Activated T-helper 1 cell treated with anti-CD3 and anti-CD28 coated beads, Interleukin-12 subunit alpha, Interleukin-12 subunit beta, Interleukin-2, Interleukin-4 antibody, amounts not matched to agents 30 ng/mL and 10 ng/mL and 1 ng/mL, durations not matched to agents 14 hours and 24 hours and 36 hours (primary cell): ENCODE measurements at regions of chr6 and their contacts with region 1.

Region 1: GRCh38 chr6:151335930-151336329 is 55.4 kb downstream of the ZBTB2 start:
- DNase-seq: no peak
- H3K4me3 Mint-ChIP-seq: no peak overlapping the region
- H3K27ac Mint-ChIP-seq: no peak overlapping the region
- H3K4me1 Mint-ChIP-seq: no peaks in the 10 kb centered on the region
- H3K27me3 Mint-ChIP-seq: peaks cover 8% of the 10 kb centered on the region

Region 2: GRCh38 chr6:150891888-150892485 is 443.9 kb before region 1 on chr6:
- intact Hi-C with region 1: loop called (anchors 1 kb)
- DNase-seq: peak; percentile 45
- H3K4me3 Mint-ChIP-seq: no peak overlapping the region
- H3K27ac Mint-ChIP-seq: no peak overlapping the region
- H3K4me1 Mint-ChIP-seq: peaks cover 24% of the 10 kb centered on the region
- H3K27me3 Mint-ChIP-seq: no peaks in the 10 kb centered on the region

Region 3: DNA sequence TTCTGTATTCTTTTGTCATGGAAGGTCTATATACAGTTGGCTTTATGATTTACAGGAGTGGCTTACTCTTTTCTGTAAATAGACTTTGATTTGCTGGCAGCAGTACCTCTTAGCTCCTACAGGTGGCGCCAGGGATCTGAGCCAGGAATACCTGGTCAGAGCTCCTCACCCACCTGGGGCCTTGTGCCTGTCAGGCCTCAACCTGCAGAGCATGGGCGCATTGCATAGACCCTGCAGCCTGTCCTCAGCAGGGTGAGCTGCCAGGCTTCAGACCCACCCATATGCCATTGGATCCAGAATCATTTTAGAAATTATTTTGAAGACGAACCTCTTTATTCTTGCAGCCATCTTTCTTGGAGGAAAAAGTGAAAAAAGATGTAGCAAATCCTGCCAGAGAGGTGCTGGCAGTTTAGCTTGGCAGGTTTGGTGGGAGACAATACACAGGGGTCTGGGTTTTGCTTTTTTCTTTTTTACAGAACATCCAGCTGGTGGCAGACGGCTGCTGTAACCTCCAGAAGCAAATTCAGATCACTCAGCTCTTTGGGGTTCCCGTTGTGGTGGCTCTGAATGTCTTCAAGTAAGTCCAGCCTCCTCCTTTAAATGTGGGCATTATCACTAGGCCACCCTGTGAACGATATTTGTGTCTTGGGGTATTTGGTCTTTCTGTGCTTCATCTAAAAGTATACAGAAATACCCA is 321.4 kb before region 1 on chr6:
- intact Hi-C with region 1: loop called (anchors 1 kb)
- DNase-seq: peak; percentile 37
- H3K4me3 Mint-ChIP-seq: no peak overlapping the region
- H3K27ac Mint-ChIP-seq: no peak overlapping the region
- H3K4me1 Mint-ChIP-seq: peaks cover 10% of the 10 kb centered on the region
- H3K27me3 Mint-ChIP-seq: no peaks in the 10 kb centered on the region

Region 4: GRCh38 chr6:151059612-151060095 is 276.3 kb before region 1 on chr6:
- intact Hi-C with region 1: no loop called
- DNase-seq: no peak
- H3K4me3 Mint-ChIP-seq: no peak overlapping the region
- H3K27ac Mint-ChIP-seq: no peak overlapping the region
- H3K4me1 Mint-ChIP-seq: no peaks in the 10 kb centered on the region
- H3K27me3 Mint-ChIP-seq: no peaks in the 10 kb centered on the region

Region 5: DNA sequence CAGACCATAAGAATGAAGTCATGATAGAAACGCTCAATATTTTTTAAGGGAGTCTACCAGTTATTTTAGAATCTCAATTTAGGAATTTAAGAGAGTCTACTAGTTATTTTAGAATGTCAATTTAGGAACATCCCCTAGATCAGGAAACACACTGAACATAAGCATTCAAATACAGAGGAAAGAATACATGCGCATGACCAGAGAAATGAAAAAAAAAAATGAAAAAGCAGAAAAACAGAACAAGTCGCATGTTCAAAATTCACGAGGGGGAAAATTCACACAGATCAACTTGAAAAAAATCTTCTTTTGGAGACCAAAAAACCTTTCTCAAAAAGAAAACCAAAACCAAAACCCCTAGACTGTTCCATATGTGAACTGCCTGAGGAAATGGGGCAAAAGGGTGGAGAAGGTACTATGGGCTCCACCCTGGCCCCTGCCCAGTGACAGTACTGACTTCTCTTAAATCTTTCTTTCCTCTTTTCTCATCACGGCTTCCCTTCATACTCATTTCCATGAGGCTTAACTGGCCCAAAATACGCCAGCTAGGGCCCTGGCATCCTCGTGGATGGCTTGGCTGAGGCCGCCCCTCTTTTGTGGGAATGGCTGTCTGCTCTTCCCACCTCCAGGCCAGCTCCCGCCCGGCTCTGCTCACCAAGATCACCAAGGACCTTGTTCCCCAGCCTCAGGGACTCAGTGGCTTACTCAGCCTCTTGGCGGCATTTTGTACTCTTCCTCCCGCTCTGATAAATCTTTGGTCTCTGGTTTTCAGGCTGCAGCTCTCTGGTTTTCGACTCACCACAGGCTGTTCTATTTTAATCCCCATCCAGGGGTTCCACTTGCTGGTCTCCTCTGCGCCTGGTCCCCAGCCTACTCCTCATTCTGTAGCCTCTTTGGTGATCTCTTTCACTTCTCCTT is 44.3 kb after region 1 on chr6:
- intact Hi-C with region 1: loop called (anchors 2 kb)
- DNase-seq: peak; percentile 27
- H3K4me3 Mint-ChIP-seq: peak overlapping the region; percentile 86
- H3K27ac Mint-ChIP-seq: peak overlapping the region; percentile 97
- H3K4me1 Mint-ChIP-seq: peaks cover 74% of the 10 kb centered on the region
- H3K27me3 Mint-ChIP-seq: no peaks in the 10 kb centered on the region

Region 6: DNA sequence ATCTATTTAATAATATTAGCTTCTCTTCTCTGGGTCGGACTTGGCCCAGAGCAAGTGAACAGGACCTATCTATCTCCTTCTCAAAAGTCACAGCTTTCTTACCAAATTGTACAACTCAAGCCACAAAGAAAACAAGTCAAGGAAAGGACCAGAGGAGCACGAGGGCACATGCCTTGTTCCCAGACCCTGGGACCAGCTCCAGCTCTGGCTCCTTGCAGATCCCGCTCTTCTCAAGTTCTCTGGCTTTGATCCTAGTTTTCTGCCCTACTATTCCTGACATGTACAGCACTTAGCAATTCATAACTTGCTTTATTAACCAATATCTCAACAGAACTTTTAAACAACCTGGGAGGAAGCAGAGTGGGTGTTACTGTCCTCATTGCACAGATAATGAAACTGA is 657.4 kb after region 1 on chr6:
- intact Hi-C with region 1: no loop called
- DNase-seq: no peak
- H3K4me3 Mint-ChIP-seq: no peak overlapping the region
- H3K27ac Mint-ChIP-seq: no peak overlapping the region
- H3K4me1 Mint-ChIP-seq: no peaks in the 10 kb centered on the region
- H3K27me3 Mint-ChIP-seq: peaks cover 2% of the 10 kb centered on the region